Calu3 (cell line): ENCODE measurements at regions of chr1 and their contacts with region 1.

Region 1: DNA sequence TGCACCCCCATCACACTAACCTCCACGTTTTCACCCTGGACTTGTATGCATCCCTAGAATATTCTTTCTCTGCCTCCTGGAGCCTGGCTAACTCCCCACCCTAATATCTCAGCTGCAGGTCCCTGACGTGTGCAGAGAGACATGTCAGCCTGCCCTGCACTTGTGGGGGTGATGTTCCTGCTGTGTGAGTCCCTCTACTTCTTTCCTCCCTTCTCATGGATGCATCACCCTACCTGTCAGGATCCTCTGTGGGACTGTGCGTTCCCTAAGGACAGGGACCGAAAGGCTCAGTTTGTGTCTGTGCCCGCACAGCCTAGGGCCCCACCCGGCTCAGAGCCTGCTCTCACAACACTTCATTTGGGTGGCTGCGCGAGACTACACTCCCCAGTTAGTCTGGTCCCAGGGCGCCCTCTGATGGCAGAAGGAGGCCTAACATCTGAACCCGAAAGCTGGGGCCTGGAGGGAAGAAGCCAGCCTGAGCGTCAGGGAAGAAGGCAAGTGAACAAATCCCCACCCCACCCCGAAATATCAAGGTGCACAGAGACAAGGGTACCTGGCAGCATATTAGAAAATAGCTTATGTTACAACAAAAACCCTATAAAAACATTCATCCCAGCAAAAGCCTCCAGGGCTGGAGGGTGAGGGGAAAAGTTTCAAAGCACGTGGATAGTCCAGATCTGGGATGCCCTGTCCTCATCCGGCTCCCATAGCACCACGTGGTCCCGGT is 3.7 kb downstream of the CD52 start:
- DNase-seq: peak; percentile 88
- H3K4me3 Mint-ChIP-seq: no peak overlapping the region
- H3K27ac Mint-ChIP-seq: no peak overlapping the region
- H3K4me1 Mint-ChIP-seq: peaks cover 8% of the 10 kb centered on the region
- H3K27me3 Mint-ChIP-seq: no peaks in the 10 kb centered on the region
- CTCF ChIP-seq: peak; percentile 66

Region 2: DNA sequence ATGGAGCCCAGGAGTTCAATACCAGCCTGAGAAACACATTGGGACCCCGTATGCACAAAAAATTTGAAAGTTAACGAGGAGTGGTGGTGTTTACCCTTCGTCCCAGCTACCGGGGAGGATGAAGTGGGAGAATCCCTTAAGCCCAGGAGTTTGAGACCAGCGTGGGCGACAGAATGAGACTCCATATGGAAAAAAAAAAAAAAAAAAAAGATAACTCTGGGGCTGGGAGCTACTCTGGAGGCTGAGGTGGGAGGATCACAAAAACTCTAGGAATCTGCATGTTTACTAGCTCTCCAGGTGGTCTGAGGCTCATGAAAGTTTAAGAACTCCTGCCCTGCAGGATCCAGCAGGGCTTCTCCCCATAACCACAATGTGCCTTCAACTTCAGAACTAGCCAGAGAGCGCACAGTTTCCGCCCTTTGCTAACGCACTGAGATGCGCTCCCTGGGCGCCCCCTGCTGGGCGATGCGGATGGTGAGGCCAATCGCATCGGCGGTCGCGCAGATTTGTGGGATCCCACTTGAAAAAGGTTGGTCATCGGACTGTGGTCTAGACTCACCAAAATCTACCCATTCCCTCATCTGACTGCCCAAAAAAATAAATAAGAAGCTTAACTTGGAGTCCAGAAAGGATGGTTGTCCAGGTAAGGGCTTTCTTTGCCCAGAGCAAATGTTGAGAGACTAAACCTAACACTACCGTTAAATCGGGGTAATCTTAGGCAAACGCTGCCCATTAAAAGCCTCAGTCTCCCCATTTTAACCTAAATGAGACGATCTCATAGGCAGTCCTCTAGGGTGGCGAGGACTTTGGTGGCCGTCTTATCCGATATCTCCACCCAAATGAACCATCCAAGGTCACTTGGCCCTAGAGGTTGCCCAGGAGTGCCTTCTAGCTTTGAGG is 42.3 kb after region 1 on chr1:
- CTCF ChIA-PET with region 1: interaction called, 3 read pairs
- intact Hi-C with region 1: loop called (anchors 5 kb)
- DNase-seq: peak; percentile 88
- H3K4me3 Mint-ChIP-seq: no peak overlapping the region
- H3K27ac Mint-ChIP-seq: no peak overlapping the region
- H3K4me1 Mint-ChIP-seq: peaks cover 14% of the 10 kb centered on the region
- H3K27me3 Mint-ChIP-seq: peaks cover 16% of the 10 kb centered on the region
- CTCF ChIP-seq: peak; percentile 74